ENCODE measurements at regions of chr14 and their contacts with region 1.

Region 1: DNA sequence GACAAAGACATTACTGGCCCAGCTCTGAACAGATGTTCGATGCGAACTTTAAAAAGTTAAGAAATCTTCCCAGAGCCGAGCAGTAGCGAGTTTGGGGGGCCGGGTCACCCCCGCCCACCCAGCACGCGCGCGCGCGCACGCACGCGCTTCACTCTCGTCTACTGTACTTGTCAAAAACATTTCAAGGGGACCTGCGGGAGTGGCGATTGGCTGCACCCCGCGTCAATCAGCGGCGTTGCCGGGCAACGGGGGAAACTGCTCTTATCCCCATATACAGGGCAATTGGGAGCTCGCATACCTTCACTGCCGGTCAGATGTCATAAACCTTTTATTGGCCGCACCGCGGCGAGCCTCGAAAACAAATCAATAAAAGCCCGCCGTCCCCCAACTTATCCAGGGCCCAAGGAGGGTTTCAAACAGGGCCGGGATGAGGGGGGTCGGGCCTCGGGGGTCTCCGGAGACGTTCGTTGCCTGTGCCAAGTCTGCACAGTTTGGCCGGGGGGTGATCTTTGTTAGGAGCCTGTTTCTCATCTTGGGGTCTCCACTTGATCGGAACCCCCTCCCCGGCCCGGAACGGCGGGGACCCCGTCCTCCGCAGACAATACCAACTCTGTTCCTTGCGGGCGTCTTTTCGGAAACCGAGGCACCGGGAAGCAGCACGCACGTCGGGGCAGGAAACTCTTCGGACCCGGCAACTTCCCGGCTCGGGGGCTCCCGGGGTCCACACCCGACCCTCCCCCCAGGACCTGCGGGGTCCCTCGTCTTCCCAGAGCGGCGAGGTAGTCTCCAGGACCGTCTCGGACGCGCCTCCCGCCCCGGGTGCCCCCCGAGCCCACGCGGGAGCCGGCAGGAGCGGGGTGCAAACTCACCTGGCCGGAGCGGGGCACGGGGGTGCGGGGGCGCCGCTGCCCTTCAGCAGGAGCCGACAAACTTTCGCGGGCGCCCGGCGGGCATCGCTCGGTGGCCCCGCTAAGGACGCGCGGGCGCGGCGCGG is 734 bp downstream of the FOXN3 start:
- DNase-seq: peak; percentile 99
- ATAC-seq: peak; percentile 75
- H3K4me3 Mint-ChIP-seq: peak overlapping the region; percentile 87
- H3K27ac Mint-ChIP-seq: peak overlapping the region; percentile 90
- H3K4me1 Mint-ChIP-seq: peaks cover 53% of the 10 kb centered on the region
- H3K27me3 Mint-ChIP-seq: no peaks in the 10 kb centered on the region
- CTCF ChIP-seq: no peak

Region 2: GRCh38 chr14:89040460-89041259 is 375.6 kb before region 1 on chr14:
- CTCF ChIA-PET with region 1: interaction called, 3 read pairs
- POLR2A ChIA-PET with region 1: no interaction called
- intact Hi-C with region 1: loop called (anchors 10 kb)
- DNase-seq: peak; percentile 89
- ATAC-seq: peak; percentile 88
- H3K4me3 Mint-ChIP-seq: peak overlapping the region; percentile 64
- H3K27ac Mint-ChIP-seq: no peak overlapping the region
- H3K4me1 Mint-ChIP-seq: peaks cover 10% of the 10 kb centered on the region
- H3K27me3 Mint-ChIP-seq: peaks cover 10% of the 10 kb centered on the region
- CTCF ChIP-seq: peak; percentile 96

Region 3: GRCh38 chr14:89178802-89179535 is 237.3 kb before region 1 on chr14:
- CTCF ChIA-PET with region 1: interaction called, 3 read pairs
- POLR2A ChIA-PET with region 1: interaction called, 3 read pairs
- intact Hi-C with region 1: loop called (anchors 5 kb)
- DNase-seq: no peak
- ATAC-seq: no peak
- H3K4me3 Mint-ChIP-seq: no peak overlapping the region
- H3K27ac Mint-ChIP-seq: peak overlapping the region; percentile 17
- H3K4me1 Mint-ChIP-seq: peaks cover 8% of the 10 kb centered on the region
- H3K27me3 Mint-ChIP-seq: no peaks in the 10 kb centered on the region
- CTCF ChIP-seq: no peak

Region 4: GRCh38 chr14:89276424-89276975 is 139.8 kb before region 1 on chr14:
- CTCF ChIA-PET with region 1: no interaction called
- POLR2A ChIA-PET with region 1: no interaction called
- intact Hi-C with region 1: loop called (anchors 5 kb)
- DNase-seq: peak; percentile 96
- ATAC-seq: peak; percentile 91
- H3K4me3 Mint-ChIP-seq: peak overlapping the region; percentile 68
- H3K27ac Mint-ChIP-seq: peak overlapping the region; percentile 99
- H3K4me1 Mint-ChIP-seq: peaks cover 87% of the 10 kb centered on the region
- H3K27me3 Mint-ChIP-seq: no peaks in the 10 kb centered on the region
- CTCF ChIP-seq: no peak

Region 5: GRCh38 chr14:89303457-89304435 is 112.6 kb before region 1 on chr14:
- CTCF ChIA-PET with region 1: no interaction called
- POLR2A ChIA-PET with region 1: no interaction called
- intact Hi-C with region 1: loop called (anchors 10 kb)
- DNase-seq: peak; percentile 21
- ATAC-seq: peak; percentile 59
- H3K4me3 Mint-ChIP-seq: peak overlapping the region; percentile 68
- H3K27ac Mint-ChIP-seq: peak overlapping the region; percentile 90
- H3K4me1 Mint-ChIP-seq: peaks cover 61% of the 10 kb centered on the region
- H3K27me3 Mint-ChIP-seq: no peaks in the 10 kb centered on the region
- CTCF ChIP-seq: no peak

Measured in activated CD8-positive, alpha-beta T cell treated with anti-CD3 and anti-CD28 coated beads for 36 hours (primary cell).